CD8-positive, alpha-beta T cell (primary cell): ENCODE measurements at regions of chrX and their contacts with region 1.

Region 1: GRCh38 chrX:131854581-131854980 is 168.5 kb upstream of the STK26 start:
- DNase-seq: peak in 2 of 9 experiments; percentile 38 to 50
- ATAC-seq: no peak
- H3K4me3 ChIP-seq: no peak overlapping the region
- H3K4me3 Mint-ChIP-seq: no peak overlapping the region
- H3K27ac ChIP-seq: no peak overlapping the region
- H3K27ac Mint-ChIP-seq: no peak overlapping the region
- H3K4me1 ChIP-seq: no peaks in the 10 kb centered on the region
- H3K4me1 Mint-ChIP-seq: no peaks in the 10 kb centered on the region
- H3K27me3 ChIP-seq: no peaks in the 10 kb centered on the region
- H3K27me3 Mint-ChIP-seq: no peaks in the 10 kb centered on the region
- CTCF ChIP-seq: no peak

Region 2: GRCh38 chrX:131728295-131729145 is 126.1 kb before region 1 on chrX:
- CTCF ChIA-PET with region 1: no interaction called
- POLR2A ChIA-PET with region 1: no interaction called
- intact Hi-C with region 1: no loop called
- DNase-seq: peak in 2 of 9 experiments; percentile 82 to 87
- ATAC-seq: no peak
- H3K4me3 ChIP-seq: no peak overlapping the region
- H3K4me3 Mint-ChIP-seq: no peak overlapping the region
- H3K27ac ChIP-seq: no peak overlapping the region
- H3K27ac Mint-ChIP-seq: no peak overlapping the region
- H3K4me1 ChIP-seq: no peaks in the 10 kb centered on the region
- H3K4me1 Mint-ChIP-seq: no peaks in the 10 kb centered on the region
- H3K27me3 ChIP-seq: no peaks in the 10 kb centered on the region
- H3K27me3 Mint-ChIP-seq: no peaks in the 10 kb centered on the region
- CTCF ChIP-seq: no peak

Region 3: DNA sequence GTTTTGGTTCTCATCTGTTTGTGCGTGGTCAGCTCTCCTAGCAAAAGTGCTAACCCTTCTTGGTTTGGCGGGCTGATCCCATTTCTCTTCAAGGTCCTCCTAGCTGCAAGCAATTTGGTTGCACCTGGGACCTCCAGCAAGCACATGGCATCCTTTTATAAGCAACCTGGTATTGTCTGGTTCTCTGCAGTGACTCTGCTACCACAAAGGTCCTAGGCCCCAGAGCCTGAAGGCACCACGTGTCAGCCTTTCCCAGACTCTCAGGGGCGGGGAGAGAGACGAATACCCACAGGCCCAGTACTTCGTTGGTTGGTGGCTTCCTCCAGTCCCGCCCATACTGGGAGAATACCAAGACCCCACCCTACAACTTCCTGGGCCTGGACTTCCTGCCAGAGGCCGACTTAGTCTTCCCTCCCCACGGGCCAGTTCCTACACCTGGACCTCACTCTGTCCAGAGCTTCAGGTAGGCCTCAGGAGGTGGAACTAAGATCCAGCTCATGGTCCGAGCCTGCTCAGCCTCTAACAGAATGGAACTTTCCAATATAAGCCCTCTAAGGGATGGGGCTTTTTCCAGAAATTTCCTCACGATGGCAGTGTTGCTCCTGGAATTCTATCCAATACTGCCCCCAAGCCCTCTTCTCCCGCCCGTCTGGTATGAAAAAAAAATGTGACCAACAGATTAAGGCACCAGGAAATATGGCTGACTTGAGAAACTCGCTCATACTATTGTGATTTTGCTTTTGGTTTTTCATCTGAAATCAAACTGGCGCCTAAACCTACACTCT is 24.0 kb before region 1 on chrX:
- CTCF ChIA-PET with region 1: no interaction called
- POLR2A ChIA-PET with region 1: no interaction called
- intact Hi-C with region 1: no loop called
- DNase-seq: peak in 5 of 9 experiments; percentile 26 to 71 (median 53)
- ATAC-seq: peak; percentile 29
- H3K4me3 ChIP-seq: peak overlapping the region in 1 of 2 experiments; percentile 8
- H3K4me3 Mint-ChIP-seq: no peak overlapping the region
- H3K27ac ChIP-seq: peak overlapping the region in 1 of 2 experiments; percentile 53
- H3K27ac Mint-ChIP-seq: peak overlapping the region; percentile 75
- H3K4me1 ChIP-seq: peaks cover 13% of the 10 kb centered on the region
- H3K4me1 Mint-ChIP-seq: peaks cover 17% of the 10 kb centered on the region
- H3K27me3 ChIP-seq: no peaks in the 10 kb centered on the region
- H3K27me3 Mint-ChIP-seq: no peaks in the 10 kb centered on the region
- CTCF ChIP-seq: no peak

Region 4: DNA sequence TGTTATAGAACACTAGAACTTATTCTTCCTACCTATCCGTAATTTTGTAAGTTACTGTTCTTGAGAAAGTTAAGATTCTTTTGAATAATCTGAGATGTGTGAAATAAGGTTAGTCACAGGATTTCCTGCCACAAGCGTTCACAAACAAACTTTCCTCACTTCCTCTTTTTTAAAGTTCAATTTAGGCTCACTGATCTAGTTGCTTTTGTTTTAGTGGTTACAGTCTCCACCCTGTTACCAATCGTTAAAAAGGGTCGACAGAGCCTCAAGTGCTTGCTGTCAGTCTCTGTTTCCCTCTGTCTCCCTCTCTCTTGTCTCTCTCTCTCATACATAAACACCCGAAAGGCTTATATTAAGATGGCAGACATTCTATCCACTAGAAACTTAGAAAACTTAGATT is 132.7 kb after region 1 on chrX:
- CTCF ChIA-PET with region 1: interaction called, 4 read pairs
- POLR2A ChIA-PET with region 1: no interaction called
- intact Hi-C with region 1: loop called in 1 of 2 experiments (anchors 10 kb)
- DNase-seq: peak in 6 of 9 experiments; percentile 2 to 82 (median 34)
- ATAC-seq: peak; percentile 96
- H3K4me3 ChIP-seq: peak overlapping the region in 1 of 2 experiments; percentile 21
- H3K4me3 Mint-ChIP-seq: peak overlapping the region; percentile 45
- H3K27ac ChIP-seq: peak overlapping the region; percentile 54 to 87
- H3K27ac Mint-ChIP-seq: peak overlapping the region; percentile 97
- H3K4me1 ChIP-seq: peaks cover 56% of the 10 kb centered on the region
- H3K4me1 Mint-ChIP-seq: peaks cover 62% of the 10 kb centered on the region
- H3K27me3 ChIP-seq: no peaks in the 10 kb centered on the region
- H3K27me3 Mint-ChIP-seq: no peaks in the 10 kb centered on the region
- CTCF ChIP-seq: no peak

Region 5: GRCh38 chrX:132375934-132376333 is 521.4 kb after region 1 on chrX:
- CTCF ChIA-PET with region 1: no interaction called
- POLR2A ChIA-PET with region 1: no interaction called
- intact Hi-C with region 1: loop called in 1 of 2 experiments (anchors 10 kb)
- DNase-seq: no peak
- ATAC-seq: no peak
- H3K4me3 ChIP-seq: no peak overlapping the region
- H3K4me3 Mint-ChIP-seq: no peak overlapping the region
- H3K27ac ChIP-seq: no peak overlapping the region
- H3K27ac Mint-ChIP-seq: no peak overlapping the region
- H3K4me1 ChIP-seq: no peaks in the 10 kb centered on the region
- H3K4me1 Mint-ChIP-seq: no peaks in the 10 kb centered on the region
- H3K27me3 ChIP-seq: no peaks in the 10 kb centered on the region
- H3K27me3 Mint-ChIP-seq: no peaks in the 10 kb centered on the region
- CTCF ChIP-seq: no peak

Region 6: DNA sequence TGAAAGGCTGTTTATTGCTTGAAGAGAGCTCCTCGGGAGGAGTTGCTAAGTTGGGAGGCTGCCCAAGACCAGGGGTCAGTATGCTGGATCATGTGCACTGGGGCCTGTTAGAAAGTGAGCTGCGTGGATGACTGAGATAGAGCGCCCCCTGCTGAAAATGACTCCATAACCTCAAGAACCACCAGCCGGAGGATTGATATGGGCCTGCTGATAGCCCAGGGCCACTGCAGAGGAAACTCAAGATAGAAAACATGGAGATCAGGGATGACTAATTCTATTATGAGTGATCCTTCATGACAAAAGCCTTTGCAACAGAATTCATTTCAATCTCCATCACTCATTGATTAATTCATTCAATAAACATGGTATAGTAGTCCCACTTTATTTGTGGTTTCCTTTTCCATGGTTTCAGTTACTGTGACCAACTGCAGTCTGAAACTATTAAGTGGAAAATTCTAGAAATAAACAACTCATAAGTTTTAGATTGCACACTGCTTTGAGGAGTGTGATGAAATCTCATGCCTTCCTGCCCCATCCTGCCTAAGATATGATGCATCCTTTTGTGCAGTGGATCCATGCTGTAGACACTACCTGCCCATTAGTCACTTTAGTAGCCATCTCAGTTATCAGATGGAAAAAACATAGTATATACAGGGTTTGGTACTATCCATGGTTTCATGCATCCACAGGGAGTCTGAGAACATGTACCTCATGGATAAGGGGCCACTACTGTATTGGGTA is 761.0 kb after region 1 on chrX:
- CTCF ChIA-PET with region 1: no interaction called
- POLR2A ChIA-PET with region 1: no interaction called
- intact Hi-C with region 1: loop called in 1 of 2 experiments (anchors 5 kb)
- DNase-seq: peak in 8 of 9 experiments; percentile 21 to 64 (median 41)
- ATAC-seq: no peak
- H3K4me3 ChIP-seq: no peak overlapping the region
- H3K4me3 Mint-ChIP-seq: no peak overlapping the region
- H3K27ac ChIP-seq: no peak overlapping the region
- H3K27ac Mint-ChIP-seq: no peak overlapping the region
- H3K4me1 ChIP-seq: no peaks in the 10 kb centered on the region
- H3K4me1 Mint-ChIP-seq: no peaks in the 10 kb centered on the region
- H3K27me3 ChIP-seq: no peaks in the 10 kb centered on the region
- H3K27me3 Mint-ChIP-seq: no peaks in the 10 kb centered on the region
- CTCF ChIP-seq: peak; percentile 15

Region 7: GRCh38 chrX:132631579-132632232 is 777.1 kb after region 1 on chrX:
- CTCF ChIA-PET with region 1: no interaction called
- POLR2A ChIA-PET with region 1: no interaction called
- intact Hi-C with region 1: loop called in 1 of 2 experiments (anchors 2 kb)
- DNase-seq: peak in 2 of 9 experiments; percentile 40 to 56
- ATAC-seq: peak; percentile 48
- H3K4me3 ChIP-seq: no peak overlapping the region
- H3K4me3 Mint-ChIP-seq: no peak overlapping the region
- H3K27ac ChIP-seq: no peak overlapping the region
- H3K27ac Mint-ChIP-seq: no peak overlapping the region
- H3K4me1 ChIP-seq: no peaks in the 10 kb centered on the region
- H3K4me1 Mint-ChIP-seq: no peaks in the 10 kb centered on the region
- H3K27me3 ChIP-seq: no peaks in the 10 kb centered on the region
- H3K27me3 Mint-ChIP-seq: peaks cover 2% of the 10 kb centered on the region
- CTCF ChIP-seq: peak; percentile 28

Region 8: DNA sequence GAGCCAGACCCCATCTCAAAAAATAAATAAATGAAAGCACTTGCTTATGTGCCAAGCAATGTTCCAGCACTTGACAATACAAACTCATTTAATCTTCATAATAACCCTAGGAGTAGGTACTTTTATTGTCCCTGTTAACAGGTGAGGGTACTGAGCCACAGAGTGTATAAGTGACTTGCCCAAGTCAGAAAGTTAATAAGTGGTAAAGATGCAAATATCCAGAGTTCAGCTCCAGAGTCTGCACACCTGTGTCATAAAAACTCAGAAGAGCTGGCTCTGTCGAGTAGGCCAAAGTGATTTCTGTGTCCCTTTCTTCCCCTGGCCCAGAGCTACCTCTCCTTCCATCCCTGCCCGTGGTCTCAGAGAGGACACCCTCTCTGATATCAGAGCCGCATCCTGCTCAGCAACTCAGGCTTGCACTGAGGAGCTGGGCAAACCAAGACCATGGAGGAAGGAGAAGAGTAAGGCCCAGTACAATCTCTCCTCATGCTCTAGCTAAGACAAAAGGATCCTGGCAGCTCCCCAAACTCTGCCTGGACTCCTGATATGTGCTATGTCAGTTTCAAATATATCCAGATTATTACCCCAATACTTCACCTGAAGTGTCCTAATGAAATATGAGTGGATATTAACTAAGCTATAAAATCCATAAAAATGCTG is 967.5 kb after region 1 on chrX:
- CTCF ChIA-PET with region 1: no interaction called
- POLR2A ChIA-PET with region 1: no interaction called
- intact Hi-C with region 1: no loop called
- DNase-seq: no peak
- ATAC-seq: no peak
- H3K4me3 ChIP-seq: no peak overlapping the region
- H3K4me3 Mint-ChIP-seq: no peak overlapping the region
- H3K27ac ChIP-seq: no peak overlapping the region
- H3K27ac Mint-ChIP-seq: no peak overlapping the region
- H3K4me1 ChIP-seq: no peaks in the 10 kb centered on the region
- H3K4me1 Mint-ChIP-seq: no peaks in the 10 kb centered on the region
- H3K27me3 ChIP-seq: no peaks in the 10 kb centered on the region
- H3K27me3 Mint-ChIP-seq: no peaks in the 10 kb centered on the region
- CTCF ChIP-seq: no peak